ENCODE measurements at regions of chr1 and their contacts with region 1.

Region 1: GRCh38 chr1:5514519-5515183 is 477.6 kb downstream of the NPHP4 start:
- DNase-seq: peak; percentile 72
- H3K4me3 Mint-ChIP-seq: no peak overlapping the region
- H3K27ac Mint-ChIP-seq: no peak overlapping the region
- H3K4me1 Mint-ChIP-seq: no peaks in the 10 kb centered on the region
- H3K27me3 Mint-ChIP-seq: peaks cover 3% of the 10 kb centered on the region

Region 2: DNA sequence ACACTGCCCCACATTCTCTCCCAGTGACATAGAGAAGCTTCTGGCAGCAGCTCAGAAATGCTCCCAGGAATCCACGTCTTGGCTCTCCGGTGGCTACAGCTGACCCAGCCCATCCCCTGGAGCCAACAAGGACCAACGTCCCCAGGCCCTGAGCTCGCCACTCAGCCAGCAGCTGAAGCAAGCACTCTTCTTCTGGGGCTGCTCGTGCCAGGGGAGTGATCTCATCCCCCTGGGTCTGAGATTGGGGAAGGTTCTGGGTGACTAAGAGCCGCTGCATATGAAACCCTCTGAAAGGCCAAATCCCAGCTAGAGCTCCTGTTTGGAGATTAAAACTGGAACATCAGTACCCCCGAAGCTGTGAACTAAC is 10.3 kb before region 1 on chr1:
- CTCF ChIA-PET with region 1: interaction called, 10 read pairs
- POLR2A ChIA-PET with region 1: no interaction called
- intact Hi-C with region 1: no loop called
- DNase-seq: no peak
- H3K4me3 Mint-ChIP-seq: no peak overlapping the region
- H3K27ac Mint-ChIP-seq: no peak overlapping the region
- H3K4me1 Mint-ChIP-seq: peaks cover under 1% of the 10 kb centered on the region
- H3K27me3 Mint-ChIP-seq: no peaks in the 10 kb centered on the region

Region 3: GRCh38 chr1:5525597-5526384 is 11.1 kb after region 1 on chr1:
- CTCF ChIA-PET with region 1: interaction called, 12 read pairs
- POLR2A ChIA-PET with region 1: no interaction called
- intact Hi-C with region 1: no loop called
- DNase-seq: no peak
- H3K4me3 Mint-ChIP-seq: no peak overlapping the region
- H3K27ac Mint-ChIP-seq: no peak overlapping the region
- H3K4me1 Mint-ChIP-seq: peaks cover 5% of the 10 kb centered on the region
- H3K27me3 Mint-ChIP-seq: peaks cover 4% of the 10 kb centered on the region

Region 4: GRCh38 chr1:5620990-5621389 is 106.3 kb after region 1 on chr1:
- CTCF ChIA-PET with region 1: no interaction called
- POLR2A ChIA-PET with region 1: no interaction called
- intact Hi-C with region 1: loop called (anchors 10 kb)
- DNase-seq: no peak
- H3K4me3 Mint-ChIP-seq: no peak overlapping the region
- H3K27ac Mint-ChIP-seq: no peak overlapping the region
- H3K4me1 Mint-ChIP-seq: no peaks in the 10 kb centered on the region
- H3K27me3 Mint-ChIP-seq: peaks cover 19% of the 10 kb centered on the region

Region 5: DNA sequence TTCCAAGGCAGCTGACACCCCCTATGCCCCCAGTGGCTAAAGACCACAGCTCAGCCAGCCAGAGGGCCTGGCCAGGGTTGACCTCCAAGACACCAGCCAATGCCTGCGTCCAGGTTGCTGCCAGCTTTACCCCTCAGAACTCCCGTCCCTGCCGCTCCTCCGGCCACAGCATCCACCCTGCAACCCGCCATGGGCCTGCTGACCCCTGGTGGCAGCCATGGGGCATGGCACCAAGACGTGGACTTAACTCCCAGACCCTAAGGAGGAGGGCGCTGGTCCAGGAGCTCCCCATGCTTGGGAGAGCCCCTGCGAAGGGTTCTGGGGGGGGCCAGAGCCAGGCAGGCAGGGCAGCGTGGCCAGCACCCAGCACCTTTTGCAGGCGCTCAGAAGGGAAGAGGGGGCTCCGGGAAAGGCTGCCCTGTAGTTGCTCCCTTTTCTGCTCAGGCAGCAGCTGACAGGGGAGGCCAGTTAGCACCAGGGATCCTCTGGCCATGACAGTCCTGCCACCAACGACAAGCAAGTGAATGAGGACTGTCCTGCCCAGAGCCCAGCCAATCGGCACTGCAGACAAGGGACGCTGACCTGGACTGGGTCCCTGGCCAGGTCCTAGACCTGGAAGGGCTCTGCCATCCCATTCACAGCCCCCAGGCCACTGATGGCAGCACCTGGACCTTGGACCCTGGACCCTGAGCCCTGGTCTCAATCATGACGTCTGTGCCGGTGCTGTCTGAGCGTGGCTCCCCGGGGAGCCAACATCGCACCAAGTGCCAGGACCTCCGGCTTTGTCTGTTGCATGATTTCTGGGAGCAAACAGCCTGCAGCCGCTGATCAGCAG is 231.3 kb after region 1 on chr1:
- CTCF ChIA-PET with region 1: interaction called, 34 read pairs
- POLR2A ChIA-PET with region 1: no interaction called
- intact Hi-C with region 1: loop called (anchors 2 kb)
- DNase-seq: peak; percentile 68
- H3K4me3 Mint-ChIP-seq: no peak overlapping the region
- H3K27ac Mint-ChIP-seq: no peak overlapping the region
- H3K4me1 Mint-ChIP-seq: no peaks in the 10 kb centered on the region
- H3K27me3 Mint-ChIP-seq: peaks cover 6% of the 10 kb centered on the region

Region 6: DNA sequence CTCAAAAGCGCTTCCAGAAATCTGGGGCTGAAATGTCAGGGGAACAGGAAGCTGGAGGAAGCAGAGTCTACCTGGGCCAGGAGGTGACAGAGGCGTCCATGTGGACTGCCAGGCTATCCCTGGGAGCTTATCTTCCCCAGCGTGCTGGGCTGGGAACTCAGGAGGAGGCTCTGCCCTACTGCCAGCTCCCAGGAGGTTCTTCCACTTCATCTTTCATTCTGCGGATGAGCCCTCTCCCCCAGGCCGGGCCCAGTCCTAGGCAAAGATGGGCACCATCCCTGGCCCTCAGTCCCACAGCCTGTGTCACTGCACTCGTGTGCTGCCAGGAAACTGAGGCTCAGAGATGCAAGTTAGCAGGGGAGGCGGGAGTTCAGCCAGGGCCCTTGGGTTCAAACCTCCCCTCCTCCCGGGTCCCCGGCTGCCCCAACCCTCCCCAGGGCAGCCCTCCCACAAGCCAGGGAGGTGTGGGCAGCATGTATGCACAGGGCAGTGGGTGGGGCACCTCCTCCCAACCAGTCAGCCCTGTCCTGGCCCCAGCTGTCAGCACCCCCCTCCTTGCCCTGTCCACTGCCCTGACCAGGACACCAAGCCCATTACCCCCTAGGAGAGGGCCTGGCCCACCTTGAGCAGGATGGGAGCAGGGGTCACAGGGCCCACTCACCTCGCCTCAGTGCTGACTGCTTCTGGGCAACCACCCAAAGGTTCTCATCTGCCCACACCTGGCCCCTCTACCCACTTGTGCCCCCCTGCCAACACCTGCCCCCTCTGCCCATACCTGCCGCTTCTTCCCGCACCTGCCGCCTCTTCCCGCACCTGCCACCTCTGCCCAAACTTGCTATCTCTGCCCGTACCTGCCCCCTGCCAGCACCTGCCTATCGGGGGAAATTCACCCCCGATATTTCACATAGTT is 251.6 kb after region 1 on chr1:
- CTCF ChIA-PET with region 1: no interaction called
- POLR2A ChIA-PET with region 1: no interaction called
- intact Hi-C with region 1: no loop called
- DNase-seq: no peak
- H3K4me3 Mint-ChIP-seq: no peak overlapping the region
- H3K27ac Mint-ChIP-seq: no peak overlapping the region
- H3K4me1 Mint-ChIP-seq: peaks cover 2% of the 10 kb centered on the region
- H3K27me3 Mint-ChIP-seq: peaks cover 45% of the 10 kb centered on the region

Region 7: DNA sequence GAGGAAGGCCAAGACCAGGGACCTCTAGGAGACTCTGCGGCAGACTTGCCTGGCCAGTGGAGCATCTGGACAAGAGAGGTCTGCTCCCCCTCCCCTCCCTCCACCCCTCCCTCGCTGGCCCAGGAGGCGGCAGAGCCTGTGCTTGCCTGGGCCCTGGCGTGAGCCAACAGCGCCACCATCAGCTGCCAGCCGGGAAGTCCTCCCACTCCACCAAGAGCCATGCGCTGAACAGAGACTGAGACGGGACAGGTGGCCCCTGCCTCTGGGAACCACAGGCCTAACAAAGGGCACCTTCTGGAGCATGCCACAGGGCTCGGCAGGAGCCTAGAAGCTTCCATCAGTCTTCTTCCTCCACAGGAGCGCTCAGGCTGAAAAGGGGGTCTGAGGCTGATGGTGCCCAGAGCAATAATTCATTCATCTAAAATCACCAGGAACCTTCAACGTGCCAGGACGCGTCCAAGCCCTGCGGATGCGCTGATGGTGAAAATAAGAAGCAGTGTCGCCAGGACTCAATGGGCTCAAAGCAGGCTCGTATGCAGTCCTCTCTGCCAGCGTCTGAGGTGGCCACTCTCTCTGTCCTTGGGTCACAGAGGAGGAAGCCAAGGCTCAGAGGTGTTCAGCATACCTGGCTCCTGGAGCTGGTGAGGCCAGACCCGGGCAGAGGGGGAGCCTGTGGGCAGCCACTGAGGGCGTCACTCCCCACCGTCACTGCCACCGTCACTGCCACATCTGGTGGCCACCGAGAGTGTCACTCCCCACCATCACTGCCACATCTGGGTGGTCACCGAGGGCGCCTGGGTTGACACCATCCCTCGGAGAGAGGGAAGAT is 316.3 kb after region 1 on chr1:
- CTCF ChIA-PET with region 1: no interaction called
- POLR2A ChIA-PET with region 1: no interaction called
- intact Hi-C with region 1: loop called (anchors 5 kb)
- DNase-seq: no peak
- H3K4me3 Mint-ChIP-seq: no peak overlapping the region
- H3K27ac Mint-ChIP-seq: no peak overlapping the region
- H3K4me1 Mint-ChIP-seq: no peaks in the 10 kb centered on the region
- H3K27me3 Mint-ChIP-seq: peaks cover 3% of the 10 kb centered on the region

Region 8: DNA sequence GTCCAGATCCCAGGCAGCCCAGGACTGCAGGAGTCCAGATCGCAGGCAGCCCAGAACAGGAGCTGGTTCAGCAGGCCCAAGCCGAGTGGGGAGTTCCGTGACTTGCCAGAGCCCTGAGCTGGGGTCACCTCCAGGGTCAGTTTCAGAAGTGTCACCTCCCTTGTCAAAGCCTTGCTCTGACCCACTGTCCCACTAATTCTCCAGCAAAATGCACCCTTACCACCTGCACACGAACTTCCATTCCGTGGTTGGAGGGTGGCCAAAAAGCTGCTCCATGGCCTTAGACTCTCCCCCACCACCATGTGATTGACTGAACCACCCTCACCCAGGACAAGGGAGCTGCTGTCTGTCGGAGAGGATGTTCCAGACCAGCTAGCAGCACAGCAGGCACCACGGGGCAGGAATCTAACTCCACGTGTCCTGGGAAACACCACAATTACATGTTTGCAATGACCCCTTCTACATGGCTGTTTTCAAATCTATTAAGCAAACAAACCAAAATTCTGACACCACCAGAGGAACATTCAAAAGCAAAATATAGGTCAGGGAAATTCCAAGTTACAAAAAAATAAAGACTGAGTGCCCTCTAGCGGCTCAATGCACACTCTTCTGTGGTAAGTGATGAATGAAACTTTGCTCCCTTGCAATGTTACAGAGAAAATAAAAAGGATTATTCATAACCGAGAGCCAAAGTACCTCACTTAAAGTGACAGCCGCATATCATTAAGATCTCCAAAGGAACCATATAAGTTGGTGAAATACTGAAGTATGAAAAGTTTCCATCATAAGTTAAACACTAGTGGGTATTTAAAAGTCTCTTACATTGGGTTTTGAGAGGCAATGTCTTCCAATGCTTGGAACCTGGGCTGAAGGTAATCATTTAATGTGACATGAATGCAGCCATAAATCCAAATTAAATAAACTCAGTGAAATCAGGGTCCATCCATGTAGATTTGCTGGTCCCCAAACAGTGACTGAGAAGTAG is 401.2 kb after region 1 on chr1:
- CTCF ChIA-PET with region 1: interaction called, 10 read pairs
- POLR2A ChIA-PET with region 1: no interaction called
- intact Hi-C with region 1: loop called (anchors 1 kb)
- DNase-seq: peak; percentile 53
- H3K4me3 Mint-ChIP-seq: no peak overlapping the region
- H3K27ac Mint-ChIP-seq: no peak overlapping the region
- H3K4me1 Mint-ChIP-seq: peaks cover 11% of the 10 kb centered on the region
- H3K27me3 Mint-ChIP-seq: no peaks in the 10 kb centered on the region

Measured in activated CD4-positive, alpha-beta memory T cell treated with anti-CD3 and anti-CD28 coated beads for 36 hours (primary cell).